Psoas muscle (tissue), 8 donors: ENCODE measurements at regions of chr18 and their contacts with region 1.

Region 1: GRCh38 chr18:25561918-25562317 is 210.0 kb upstream of the ZNF521 start:
- DNase-seq: no peak
- ATAC-seq: peak in 1 of 4 donors; percentile 9
- H3K4me3 ChIP-seq: no peak overlapping the region
- H3K27ac ChIP-seq: no peak overlapping the region
- H3K4me1 ChIP-seq: peaks cover 6% of the 10 kb centered on the region
- H3K27me3 ChIP-seq: no peaks in the 10 kb centered on the region
- CTCF ChIP-seq: peak; percentile 31

Region 2: DNA sequence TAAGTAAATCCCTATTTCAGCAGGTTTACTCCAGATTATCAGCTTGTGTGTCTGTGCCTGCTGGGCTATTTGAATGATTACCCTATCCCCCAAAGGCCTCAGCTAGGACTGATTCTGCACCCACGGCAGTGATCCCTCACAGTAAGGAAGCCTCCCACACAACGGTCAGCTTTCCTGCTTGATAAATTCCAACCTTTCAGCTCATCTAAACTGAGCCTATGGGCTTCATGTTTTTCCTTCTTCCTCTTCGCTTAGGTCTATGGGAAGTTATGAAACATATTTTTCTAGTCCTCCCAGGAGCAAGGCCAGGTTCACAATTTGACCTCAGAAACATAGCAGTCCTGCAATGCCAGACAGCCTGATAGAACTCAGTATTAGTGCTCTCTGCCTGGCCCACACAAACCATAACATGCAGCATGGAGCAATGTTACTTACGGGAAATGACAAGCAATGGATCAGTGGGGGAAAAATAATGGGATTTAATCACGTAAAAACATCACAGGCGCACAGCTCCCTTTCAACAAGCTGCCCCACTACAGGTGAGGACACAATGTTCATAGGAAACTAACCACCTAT is 380.9 kb before region 1 on chr18:
- intact Hi-C with region 1: no loop called
- DNase-seq: no peak
- ATAC-seq: no peak
- H3K4me3 ChIP-seq: no peak overlapping the region
- H3K27ac ChIP-seq: no peak overlapping the region
- H3K4me1 ChIP-seq: peaks cover 10% of the 10 kb centered on the region
- H3K27me3 ChIP-seq: no peaks in the 10 kb centered on the region
- CTCF ChIP-seq: no peak

Region 3: GRCh38 chr18:25467226-25467987 is 94.5 kb before region 1 on chr18:
- intact Hi-C with region 1: loop called (anchors 5 to 10 kb)
- DNase-seq: peak; percentile 84 to 93
- ATAC-seq: peak; percentile 98 to 100 (median 99)
- H3K4me3 ChIP-seq: peak overlapping the region; percentile 26
- H3K27ac ChIP-seq: peak overlapping the region; percentile 83
- H3K4me1 ChIP-seq: peaks cover 35% of the 10 kb centered on the region
- H3K27me3 ChIP-seq: no peaks in the 10 kb centered on the region
- CTCF ChIP-seq: no peak

Region 4: GRCh38 chr18:25517881-25518715 is 43.8 kb before region 1 on chr18:
- intact Hi-C with region 1: loop called in 1 of 2 experiments (anchors 5 kb)
- DNase-seq: no peak
- ATAC-seq: no peak
- H3K4me3 ChIP-seq: no peak overlapping the region
- H3K27ac ChIP-seq: no peak overlapping the region
- H3K4me1 ChIP-seq: peaks cover 5% of the 10 kb centered on the region
- H3K27me3 ChIP-seq: no peaks in the 10 kb centered on the region
- CTCF ChIP-seq: no peak

Region 5: DNA sequence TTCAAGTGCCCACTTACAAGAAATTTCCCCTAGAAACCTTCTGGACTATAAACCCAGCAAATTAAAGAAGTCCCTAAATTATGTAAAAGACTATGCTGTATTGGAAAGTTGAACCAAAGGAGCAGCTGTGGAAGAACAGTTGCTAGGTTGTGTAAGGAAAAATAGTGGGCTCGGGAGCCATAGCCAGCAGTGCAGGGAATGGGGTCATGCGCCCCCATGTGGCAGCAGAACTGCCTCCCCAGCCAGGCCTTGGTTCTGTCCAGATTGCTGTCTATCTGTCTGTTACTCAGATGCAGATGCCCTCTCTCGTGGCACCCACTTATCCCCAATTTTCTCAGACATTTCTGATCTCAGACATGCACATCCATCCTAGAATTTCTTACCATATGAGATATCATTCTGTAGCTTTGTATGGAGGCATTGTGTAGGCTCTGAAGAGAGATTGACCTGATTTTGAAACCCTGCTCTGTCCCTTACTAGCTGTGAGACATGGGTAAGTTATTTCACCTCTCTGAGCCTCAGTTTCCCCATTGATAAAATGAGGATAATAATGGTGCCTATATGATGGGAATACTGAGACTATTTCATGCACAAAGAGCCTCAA is 270.2 kb after region 1 on chr18:
- intact Hi-C with region 1: loop called in 1 of 2 experiments (anchors 10 kb)
- DNase-seq: peak; percentile 61 to 71
- ATAC-seq: peak; percentile 86 to 93 (median 87)
- H3K4me3 ChIP-seq: no peak overlapping the region
- H3K27ac ChIP-seq: no peak overlapping the region
- H3K4me1 ChIP-seq: no peaks in the 10 kb centered on the region
- H3K27me3 ChIP-seq: no peaks in the 10 kb centered on the region
- CTCF ChIP-seq: peak; percentile 75